Head of caudate nucleus (tissue), 42 donors: ENCODE measurements at regions of chr16 and their contacts with region 1.

Region 1: GRCh38 chr16:2752035-2752849 is at the start of gene SRRM2:
- DNase-seq: peak; percentile 87 to 98 (median 93)

Region 2: GRCh38 chr16:2777231-2777902 is 25.1 kb after region 1 on chr16 and contains the start of gene ELOB:
- intact Hi-C with region 1: loop called (anchors 1 kb)
- DNase-seq: peak; percentile 44 to 93 (median 85)

Region 3: DNA sequence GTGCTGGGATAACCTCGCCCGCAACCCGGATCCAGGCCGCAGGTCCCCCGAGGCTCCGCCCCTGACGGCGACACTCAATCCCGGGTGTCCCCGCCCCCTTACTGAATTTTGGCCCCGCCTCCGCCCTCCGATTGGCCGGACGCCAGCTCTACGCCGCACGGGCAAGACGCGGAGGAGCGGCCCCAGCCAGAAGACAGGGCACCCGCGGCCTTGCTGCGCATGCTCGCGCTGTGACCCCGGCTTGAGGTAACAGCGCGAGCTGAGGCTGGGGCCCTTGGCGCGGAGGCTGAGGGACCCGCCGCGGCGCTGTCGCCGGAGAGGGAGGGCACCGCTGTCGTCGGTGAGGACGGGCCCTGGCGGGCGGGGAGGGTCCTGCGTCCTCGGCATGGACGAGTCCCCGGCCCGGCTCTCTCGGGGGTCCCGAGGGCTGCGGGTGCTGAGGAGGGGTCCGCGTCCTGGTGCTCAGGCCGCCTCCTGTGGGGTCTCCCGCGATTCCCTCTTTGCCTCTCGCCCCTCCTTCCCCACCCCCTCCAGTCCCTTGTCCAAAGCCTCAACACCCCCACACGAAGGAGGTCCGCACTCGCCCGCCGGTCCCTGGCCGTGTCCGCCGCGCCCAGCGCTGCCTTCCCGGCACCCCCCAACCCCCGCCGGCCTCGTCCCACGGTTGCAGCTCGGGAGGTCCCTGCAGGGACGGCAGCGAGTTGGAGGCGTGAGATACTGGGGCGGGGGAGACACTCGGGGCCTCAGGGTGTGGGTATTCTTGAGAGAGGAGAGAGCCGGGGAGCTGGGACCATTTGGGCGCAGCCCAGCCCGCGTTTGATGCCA is 131.0 kb after region 1 on chr16 and contains the start of gene FLYWCH2:
- intact Hi-C with region 1: no loop called
- DNase-seq: peak; percentile 97 to 100 (median 99)

Region 4: GRCh38 chr16:3383045-3383448 is 630.8 kb after region 1 on chr16:
- intact Hi-C with region 1: no loop called
- DNase-seq: no peak